ENCODE measurements at regions of chr6 and their contacts with region 1.

Region 1: GRCh38 chr6:27146706-27147505 is 100.6 kb upstream of the PRSS16 start:
- DNase-seq: peak; percentile 98
- H3K4me3 ChIP-seq: peak overlapping the region; percentile 53
- H3K27ac ChIP-seq: peak overlapping the region; percentile 92
- H3K4me1 ChIP-seq: peaks cover 5% of the 10 kb centered on the region
- H3K27me3 ChIP-seq: no peaks in the 10 kb centered on the region
- CTCF ChIP-seq: no peak

Region 2: GRCh38 chr6:26183581-26184366 is 963.1 kb before region 1 on chr6:
- CTCF ChIA-PET with region 1: no interaction called
- POLR2A ChIA-PET with region 1: interaction called, 17 read pairs
- intact Hi-C with region 1: no loop called
- DNase-seq: peak; percentile 83
- H3K4me3 ChIP-seq: peak overlapping the region; percentile 33
- H3K27ac ChIP-seq: peak overlapping the region; percentile 68
- H3K4me1 ChIP-seq: peaks cover 10% of the 10 kb centered on the region
- H3K27me3 ChIP-seq: no peaks in the 10 kb centered on the region
- CTCF ChIP-seq: no peak

Region 3: DNA sequence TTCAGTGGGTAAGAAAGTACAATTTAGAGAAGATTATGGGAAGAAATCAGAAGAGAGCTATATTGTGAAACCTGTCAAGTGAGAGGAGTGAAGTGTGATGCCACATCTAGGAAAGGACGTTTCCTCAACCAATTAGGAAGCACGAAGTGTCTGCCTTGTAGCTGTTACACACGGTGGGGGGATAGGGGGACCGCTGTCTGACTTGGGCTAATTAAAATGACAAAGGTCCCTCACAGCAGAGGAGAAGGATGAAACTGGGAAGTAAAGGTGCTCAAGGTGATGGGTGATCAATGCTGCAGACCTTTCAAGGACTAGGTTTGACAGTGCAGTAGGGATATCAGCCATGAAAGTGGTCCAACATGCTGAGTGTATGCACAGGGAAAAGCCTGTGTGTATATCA is 80.5 kb before region 1 on chr6:
- CTCF ChIA-PET with region 1: no interaction called
- POLR2A ChIA-PET with region 1: interaction called, 11 read pairs
- intact Hi-C with region 1: no loop called
- DNase-seq: no peak
- H3K4me3 ChIP-seq: no peak overlapping the region
- H3K27ac ChIP-seq: no peak overlapping the region
- H3K4me1 ChIP-seq: no peaks in the 10 kb centered on the region
- H3K27me3 ChIP-seq: no peaks in the 10 kb centered on the region
- CTCF ChIP-seq: no peak

Region 4: GRCh38 chr6:27224729-27225128 is 77.8 kb after region 1 on chr6:
- CTCF ChIA-PET with region 1: no interaction called
- POLR2A ChIA-PET with region 1: interaction called, 12 read pairs
- intact Hi-C with region 1: no loop called
- DNase-seq: no peak
- H3K4me3 ChIP-seq: no peak overlapping the region
- H3K27ac ChIP-seq: no peak overlapping the region
- H3K4me1 ChIP-seq: peaks cover 3% of the 10 kb centered on the region
- H3K27me3 ChIP-seq: no peaks in the 10 kb centered on the region
- CTCF ChIP-seq: no peak

Region 5: GRCh38 chr6:27720607-27721580 is 574.0 kb after region 1 on chr6:
- CTCF ChIA-PET with region 1: no interaction called
- POLR2A ChIA-PET with region 1: interaction called, 26 read pairs
- intact Hi-C with region 1: no loop called
- DNase-seq: no peak
- H3K4me3 ChIP-seq: no peak overlapping the region
- H3K27ac ChIP-seq: no peak overlapping the region
- H3K4me1 ChIP-seq: no peaks in the 10 kb centered on the region
- H3K27me3 ChIP-seq: no peaks in the 10 kb centered on the region
- CTCF ChIP-seq: no peak

Measured in A673 (cell line).